ENCODE measurements at regions of chr11 and their contacts with region 1.

Region 1: GRCh38 chr11:115324581-115325432 is 179.4 kb downstream of the CADM1 start:
- DNase-seq: peak; percentile 77
- H3K4me3 ChIP-seq: no peak overlapping the region
- H3K27ac ChIP-seq: no peak overlapping the region
- H3K4me1 ChIP-seq: no peaks in the 10 kb centered on the region
- H3K27me3 ChIP-seq: no peaks in the 10 kb centered on the region
- CTCF ChIP-seq: peak; percentile 85

Region 2: GRCh38 chr11:114651145-114651718 is 673.6 kb before region 1 on chr11:
- CTCF ChIA-PET with region 1: no interaction called
- POLR2A ChIA-PET with region 1: no interaction called
- intact Hi-C with region 1: no loop called
- DNase-seq: no peak
- H3K4me3 ChIP-seq: no peak overlapping the region
- H3K27ac ChIP-seq: no peak overlapping the region
- H3K4me1 ChIP-seq: no peaks in the 10 kb centered on the region
- H3K27me3 ChIP-seq: no peaks in the 10 kb centered on the region
- CTCF ChIP-seq: no peak

Region 3: DNA sequence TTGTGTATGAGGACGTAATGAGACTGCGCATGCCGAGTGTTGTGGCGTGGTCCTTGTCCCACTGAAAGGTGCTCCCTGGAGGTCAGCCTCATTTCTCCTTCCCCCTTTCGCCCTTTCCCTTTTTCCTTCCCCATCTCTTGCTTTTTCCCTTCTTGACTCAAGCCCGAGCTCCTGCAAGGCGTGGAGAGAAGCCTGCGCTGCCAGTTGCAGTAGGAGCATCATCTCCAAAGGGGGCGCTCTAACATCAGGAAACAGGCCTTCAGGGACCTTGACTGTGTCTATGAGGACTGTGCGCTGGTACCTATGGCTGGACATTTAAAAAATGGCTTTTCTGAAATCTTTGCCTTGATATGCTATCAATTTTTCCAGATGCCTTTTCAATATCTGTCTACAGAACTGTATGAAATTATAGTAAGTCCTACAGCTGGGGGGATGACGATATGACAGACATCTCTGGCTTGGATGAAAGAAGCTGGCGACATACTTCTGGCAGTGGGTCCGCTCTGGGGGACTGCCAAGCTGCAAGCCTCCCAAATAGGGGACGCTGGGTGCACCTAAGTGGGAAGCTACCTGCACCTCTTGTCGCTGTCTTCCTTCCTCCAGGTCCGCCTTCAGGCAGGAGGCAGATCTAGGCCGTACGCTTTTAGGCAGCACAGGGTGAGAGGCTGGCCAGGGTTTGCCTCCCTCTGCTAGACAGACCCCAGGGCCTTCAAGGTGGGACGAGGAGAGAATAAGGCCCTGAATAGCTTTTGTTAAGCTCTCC is 550.0 kb before region 1 on chr11:
- CTCF ChIA-PET with region 1: no interaction called
- POLR2A ChIA-PET with region 1: no interaction called
- intact Hi-C with region 1: loop called (anchors 5 kb)
- DNase-seq: peak; percentile 69
- H3K4me3 ChIP-seq: no peak overlapping the region
- H3K27ac ChIP-seq: no peak overlapping the region
- H3K4me1 ChIP-seq: no peaks in the 10 kb centered on the region
- H3K27me3 ChIP-seq: no peaks in the 10 kb centered on the region
- CTCF ChIP-seq: peak; percentile 95

Region 4: GRCh38 chr11:115390441-115390840 is 65.6 kb after region 1 on chr11:
- CTCF ChIA-PET with region 1: no interaction called
- POLR2A ChIA-PET with region 1: no interaction called
- intact Hi-C with region 1: no loop called
- DNase-seq: no peak
- H3K4me3 ChIP-seq: no peak overlapping the region
- H3K27ac ChIP-seq: no peak overlapping the region
- H3K4me1 ChIP-seq: no peaks in the 10 kb centered on the region
- H3K27me3 ChIP-seq: no peaks in the 10 kb centered on the region
- CTCF ChIP-seq: no peak

Region 5: DNA sequence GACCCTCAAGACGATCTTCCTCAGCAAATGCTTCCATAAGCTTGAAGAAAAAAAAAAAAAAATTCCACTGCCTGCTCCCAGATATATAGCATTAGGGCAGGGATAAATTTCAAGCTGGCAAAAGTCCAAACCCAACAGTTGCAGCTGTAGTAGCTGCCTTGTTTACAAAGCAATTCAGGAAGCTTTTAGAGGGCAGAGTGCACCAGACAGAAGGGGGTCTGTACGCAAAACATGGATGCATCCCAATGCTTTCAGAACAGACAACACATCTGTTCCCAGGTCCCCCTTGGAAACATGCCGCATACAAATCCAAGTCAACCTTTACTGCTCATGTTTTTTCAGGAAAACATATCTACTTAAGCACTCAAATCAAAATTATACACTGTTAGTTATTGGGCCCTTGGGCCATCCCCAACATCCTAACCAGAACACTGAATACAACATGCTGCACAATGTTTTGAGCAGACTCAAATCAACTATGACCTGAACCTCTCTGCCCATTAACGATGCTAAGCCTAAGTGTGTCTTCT is 84.9 kb after region 1 on chr11:
- CTCF ChIA-PET with region 1: no interaction called
- POLR2A ChIA-PET with region 1: no interaction called
- intact Hi-C with region 1: no loop called
- DNase-seq: no peak
- H3K4me3 ChIP-seq: no peak overlapping the region
- H3K27ac ChIP-seq: no peak overlapping the region
- H3K4me1 ChIP-seq: no peaks in the 10 kb centered on the region
- H3K27me3 ChIP-seq: no peaks in the 10 kb centered on the region
- CTCF ChIP-seq: no peak

Region 6: GRCh38 chr11:116224154-116224888 is 899.5 kb after region 1 on chr11:
- CTCF ChIA-PET with region 1: no interaction called
- POLR2A ChIA-PET with region 1: no interaction called
- intact Hi-C with region 1: loop called (anchors 5 kb)
- DNase-seq: peak; percentile 72
- H3K4me3 ChIP-seq: no peak overlapping the region
- H3K27ac ChIP-seq: no peak overlapping the region
- H3K4me1 ChIP-seq: no peaks in the 10 kb centered on the region
- H3K27me3 ChIP-seq: no peaks in the 10 kb centered on the region
- CTCF ChIP-seq: peak; percentile 88

Region 7: DNA sequence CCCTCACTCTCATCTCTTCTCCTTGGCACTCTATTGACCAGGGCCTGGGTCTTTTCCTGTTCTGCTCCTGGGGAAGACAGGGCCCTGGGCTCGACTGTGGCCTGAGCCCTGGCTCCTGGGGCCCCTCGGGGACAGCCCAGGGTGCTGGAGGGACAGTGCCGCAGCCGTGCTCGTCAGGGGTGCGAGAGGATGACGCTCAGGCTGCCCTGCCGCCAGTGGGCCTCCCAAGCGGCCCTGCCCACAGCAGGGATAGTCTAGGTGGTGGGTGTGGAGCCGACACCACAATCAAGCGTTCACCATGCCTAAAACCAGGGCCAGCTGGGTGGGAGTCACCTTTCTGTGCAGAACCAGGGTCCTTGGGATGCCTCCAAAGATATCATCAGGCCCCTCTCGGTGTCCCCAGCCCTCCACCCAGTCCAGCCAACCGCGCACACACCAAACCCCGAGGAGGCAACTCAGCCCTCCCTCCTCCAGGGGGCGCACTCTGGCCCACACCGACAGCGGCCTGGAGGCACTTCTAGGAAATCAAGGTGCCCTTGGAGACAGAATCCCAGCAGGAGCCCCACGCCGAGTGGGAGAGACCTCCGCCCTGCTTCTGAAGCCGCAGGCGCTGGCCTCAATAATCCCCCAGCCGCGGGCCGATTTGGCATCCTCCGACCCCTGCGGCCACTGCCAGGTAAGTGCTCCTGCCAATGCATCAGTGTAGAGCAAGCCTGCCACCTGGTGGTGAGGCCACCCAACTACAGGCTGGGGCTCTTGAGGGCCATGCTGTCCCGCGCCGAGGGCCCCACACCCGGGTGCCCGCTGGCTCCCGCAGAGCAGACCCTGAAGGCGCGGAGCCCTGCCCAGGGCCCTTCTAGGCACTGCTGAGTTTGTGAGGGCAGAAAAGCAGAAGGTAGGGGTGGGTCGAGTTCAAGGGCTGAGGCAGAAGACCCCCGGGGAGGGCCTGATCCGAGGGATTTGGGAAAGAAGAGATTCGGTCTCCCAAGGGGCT is 951.5 kb after region 1 on chr11:
- CTCF ChIA-PET with region 1: no interaction called
- POLR2A ChIA-PET with region 1: no interaction called
- intact Hi-C with region 1: loop called (anchors 5 kb)
- DNase-seq: peak; percentile 60
- H3K4me3 ChIP-seq: no peak overlapping the region
- H3K27ac ChIP-seq: no peak overlapping the region
- H3K4me1 ChIP-seq: no peaks in the 10 kb centered on the region
- H3K27me3 ChIP-seq: no peaks in the 10 kb centered on the region
- CTCF ChIP-seq: peak; percentile 90

Region 8: GRCh38 chr11:116499396-116500003 is 1174.7 kb after region 1 on chr11:
- CTCF ChIA-PET with region 1: no interaction called
- POLR2A ChIA-PET with region 1: no interaction called
- intact Hi-C with region 1: loop called (anchors 10 kb)
- DNase-seq: peak; percentile 82
- H3K4me3 ChIP-seq: no peak overlapping the region
- H3K27ac ChIP-seq: no peak overlapping the region
- H3K4me1 ChIP-seq: no peaks in the 10 kb centered on the region
- H3K27me3 ChIP-seq: peaks cover 52% of the 10 kb centered on the region
- CTCF ChIP-seq: peak; percentile 88

Region 9: GRCh38 chr11:116641561-116642045 is 1316.8 kb after region 1 on chr11:
- CTCF ChIA-PET with region 1: no interaction called
- POLR2A ChIA-PET with region 1: no interaction called
- intact Hi-C with region 1: loop called (anchors 5 kb)
- DNase-seq: peak; percentile 30
- H3K4me3 ChIP-seq: no peak overlapping the region
- H3K27ac ChIP-seq: no peak overlapping the region
- H3K4me1 ChIP-seq: no peaks in the 10 kb centered on the region
- H3K27me3 ChIP-seq: peaks cover 25% of the 10 kb centered on the region
- CTCF ChIP-seq: peak; percentile 83

Measured in A673 (cell line).